ENCODE measurements at regions of chr6 and their contacts with region 1.

Region 1: DNA sequence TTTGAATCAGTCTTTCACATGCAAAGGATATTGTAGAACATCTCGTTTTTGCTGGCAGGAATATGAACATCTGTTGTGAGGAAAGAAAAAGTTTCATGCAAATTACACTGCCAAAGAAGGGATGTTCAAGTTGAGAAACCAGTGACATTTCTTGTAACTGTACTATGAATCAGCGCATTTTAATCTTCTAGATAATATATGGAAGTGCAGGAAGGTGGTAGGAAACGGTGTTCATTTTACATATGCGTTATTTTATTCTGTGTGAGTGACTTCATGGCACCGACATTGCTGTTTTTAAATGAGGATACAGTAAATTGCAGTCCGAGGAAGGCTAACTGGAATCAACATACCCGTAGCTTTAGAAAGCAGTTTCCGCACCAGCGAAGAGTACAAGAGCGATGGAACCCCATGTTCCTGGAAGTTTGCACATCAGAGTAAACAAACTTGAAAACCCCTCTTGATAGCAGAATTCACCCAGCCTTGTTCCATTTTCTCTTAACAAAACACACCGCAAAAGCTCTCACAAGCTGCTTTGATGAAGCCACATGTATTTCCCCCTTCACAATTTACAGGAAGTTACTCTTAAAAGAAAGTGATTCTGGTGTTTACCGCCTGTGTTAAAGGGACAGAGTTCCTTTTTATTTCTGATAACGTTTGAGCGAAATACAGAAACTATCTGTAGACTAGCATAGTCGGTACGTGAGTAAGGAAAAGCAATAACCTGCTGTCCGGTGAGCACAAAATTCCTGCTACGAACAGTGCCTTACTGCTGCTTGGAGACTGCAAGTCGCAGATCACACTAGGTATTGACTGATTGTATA is 11.5 kb downstream of the PRDM1 start:
- DNase-seq: peak in 8 of 9 donors; percentile 60 to 95 (median 90)
- ATAC-seq: peak; percentile 79
- H3K4me3 ChIP-seq: peak overlapping the region; percentile 60
- H3K4me3 Mint-ChIP-seq: peak overlapping the region; percentile 87 to 99 (median 93)
- H3K27ac ChIP-seq: peak overlapping the region; percentile 74
- H3K27ac Mint-ChIP-seq: peak overlapping the region; percentile 93 to 100 (median 97)
- H3K4me1 ChIP-seq: peaks cover 35 to 39% of the 10 kb centered on the region in 2 donors
- H3K4me1 Mint-ChIP-seq: peaks cover 33 to 96% (median 92%) of the 10 kb centered on the region in 7 donors
- H3K27me3 ChIP-seq: no peaks in the 10 kb centered on the region
- H3K27me3 Mint-ChIP-seq: no peaks in the 10 kb centered on the region

Region 2: GRCh38 chr6:105781915-105782314 is 315.7 kb before region 1 on chr6:
- CTCF ChIA-PET with region 1: no interaction called
- POLR2A ChIA-PET with region 1: no interaction called
- intact Hi-C with region 1: loop called in 1 of 2 experiments (anchors 2 kb)
- DNase-seq: peak in 7 of 9 donors; percentile 39 to 77 (median 63)
- ATAC-seq: peak; percentile 85
- H3K4me3 ChIP-seq: peak overlapping the region; percentile 10
- H3K4me3 Mint-ChIP-seq: peak overlapping the region; percentile 16 to 82 (median 71)
- H3K27ac ChIP-seq: peak overlapping the region; percentile 52
- H3K27ac Mint-ChIP-seq: peak overlapping the region; percentile 57 to 92 (median 71)
- H3K4me1 ChIP-seq: peaks cover 12 to 26% of the 10 kb centered on the region in 2 donors
- H3K4me1 Mint-ChIP-seq: peaks cover 31 to 80% (median 70%) of the 10 kb centered on the region in 7 donors
- H3K27me3 ChIP-seq: no peaks in the 10 kb centered on the region
- H3K27me3 Mint-ChIP-seq: no peaks in the 10 kb centered on the region

Region 3: DNA sequence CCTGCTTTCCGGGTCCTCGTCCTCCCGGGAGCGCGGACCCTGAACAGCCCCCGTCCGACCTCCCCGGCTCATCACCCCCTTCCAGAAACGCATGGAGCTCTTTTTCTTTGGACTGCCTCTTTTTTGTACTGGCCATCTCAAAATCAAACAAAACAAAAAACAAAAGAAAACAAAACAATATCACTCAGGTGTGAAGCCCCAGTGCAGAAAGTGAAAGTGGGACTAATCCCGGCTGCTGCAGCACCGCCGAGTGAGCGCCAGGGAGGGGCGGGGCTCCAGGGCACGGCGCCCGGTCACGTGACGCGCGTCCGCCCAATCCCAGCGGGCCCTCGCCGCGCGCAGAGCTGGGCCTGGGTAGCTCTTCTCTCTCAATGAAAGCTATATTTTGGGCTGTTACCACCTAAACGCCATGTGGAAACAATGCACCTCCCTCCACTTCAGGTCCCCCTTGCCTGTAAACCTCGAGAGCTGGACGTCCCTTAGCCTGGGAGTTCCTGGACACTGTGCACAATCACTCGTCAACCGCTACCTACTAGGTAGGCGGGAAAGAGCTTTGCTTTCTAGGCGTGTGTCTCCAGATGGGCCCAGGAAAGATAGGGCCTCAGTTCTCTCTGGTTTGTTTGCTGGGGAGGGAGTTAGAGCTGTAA is 105.2 kb before region 1 on chr6:
- CTCF ChIA-PET with region 1: interaction called, 4 read pairs
- POLR2A ChIA-PET with region 1: interaction called, 12 read pairs
- intact Hi-C with region 1: loop called (anchors 1 kb)
- DNase-seq: peak; percentile 82 to 91 (median 89)
- ATAC-seq: peak; percentile 93
- H3K4me3 ChIP-seq: peak overlapping the region; percentile 89
- H3K4me3 Mint-ChIP-seq: peak overlapping the region; percentile 88 to 98 (median 92)
- H3K27ac ChIP-seq: peak overlapping the region; percentile 79
- H3K27ac Mint-ChIP-seq: peak overlapping the region; percentile 87 to 97 (median 93)
- H3K4me1 ChIP-seq: peaks cover 14 to 23% of the 10 kb centered on the region in 2 donors
- H3K4me1 Mint-ChIP-seq: peaks cover 16 to 58% (median 29%) of the 10 kb centered on the region in 7 donors
- H3K27me3 ChIP-seq: peaks cover 0 to 32% of the 10 kb centered on the region in 2 donors
- H3K27me3 Mint-ChIP-seq: peaks cover 48 to 73% (median 62%) of the 10 kb centered on the region in 5 donors

Region 4: GRCh38 chr6:106114492-106115265 is 17.1 kb after region 1 on chr6:
- CTCF ChIA-PET with region 1: interaction called, 3 read pairs
- POLR2A ChIA-PET with region 1: interaction called, 9 read pairs
- intact Hi-C with region 1: loop called (anchors 1 kb)
- DNase-seq: peak in 1 of 9 donors; percentile 64
- ATAC-seq: no peak
- H3K4me3 ChIP-seq: peak overlapping the region; percentile 28
- H3K4me3 Mint-ChIP-seq: peak overlapping the region in 3 of 10 donors; percentile 11 to 52 (median 15)
- H3K27ac ChIP-seq: no peak overlapping the region
- H3K27ac Mint-ChIP-seq: peak overlapping the region in 2 of 9 donors; percentile 47 to 59
- H3K4me1 ChIP-seq: peaks cover 39 to 78% of the 10 kb centered on the region in 2 donors
- H3K4me1 Mint-ChIP-seq: peaks cover 39 to 84% (median 61%) of the 10 kb centered on the region in 7 donors
- H3K27me3 ChIP-seq: no peaks in the 10 kb centered on the region
- H3K27me3 Mint-ChIP-seq: peaks cover 0 to 5% (median 0%) of the 10 kb centered on the region in 5 donors

Region 5: GRCh38 chr6:106173124-106173879 is 75.7 kb after region 1 on chr6:
- CTCF ChIA-PET with region 1: no interaction called
- POLR2A ChIA-PET with region 1: no interaction called
- intact Hi-C with region 1: loop called in 1 of 2 experiments (anchors 2 kb)
- DNase-seq: peak in 5 of 9 donors; percentile 15 to 33 (median 32)
- ATAC-seq: peak; percentile 45
- H3K4me3 ChIP-seq: no peak overlapping the region
- H3K4me3 Mint-ChIP-seq: peak overlapping the region in 7 of 10 donors; percentile 30 to 76 (median 54)
- H3K27ac ChIP-seq: no peak overlapping the region
- H3K27ac Mint-ChIP-seq: peak overlapping the region; percentile 6 to 94 (median 74)
- H3K4me1 ChIP-seq: peaks cover 0 to 9% of the 10 kb centered on the region in 2 donors
- H3K4me1 Mint-ChIP-seq: peaks cover 14 to 41% (median 20%) of the 10 kb centered on the region in 7 donors
- H3K27me3 ChIP-seq: no peaks in the 10 kb centered on the region
- H3K27me3 Mint-ChIP-seq: no peaks in the 10 kb centered on the region

Region 6: DNA sequence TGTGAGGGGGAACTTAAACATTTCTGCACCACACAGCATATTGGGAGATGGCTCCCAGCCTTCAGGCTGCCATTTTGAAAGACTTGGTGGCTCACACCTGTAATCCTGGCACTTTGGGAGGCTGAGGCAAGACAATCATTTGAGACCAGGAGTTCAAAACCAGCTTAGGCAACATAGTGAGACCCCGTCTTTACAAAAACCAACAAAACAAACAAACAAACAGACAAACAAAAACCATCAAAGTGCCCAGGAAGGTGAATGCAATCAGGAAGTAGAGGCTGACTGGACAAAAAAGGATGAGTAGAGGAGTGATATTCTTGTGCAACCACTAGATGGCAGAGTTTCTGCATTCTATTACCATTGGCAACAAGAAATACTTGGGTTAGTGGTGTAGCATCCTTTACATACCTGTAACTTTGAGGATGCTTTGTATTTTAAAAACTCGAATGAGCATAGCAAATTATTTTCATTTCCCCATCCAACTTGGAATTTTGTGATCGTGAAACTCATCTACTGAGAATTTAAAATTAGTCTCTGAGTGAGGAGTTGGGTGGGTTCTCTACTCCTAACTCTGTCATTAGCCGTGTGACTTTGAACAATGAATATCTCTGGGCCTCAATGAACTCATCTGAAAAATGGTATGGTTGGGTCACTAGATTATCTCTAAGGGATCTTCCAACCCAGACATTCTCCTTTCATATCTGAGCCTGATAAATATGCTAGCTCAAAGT is 347.3 kb after region 1 on chr6:
- CTCF ChIA-PET with region 1: no interaction called
- POLR2A ChIA-PET with region 1: no interaction called
- intact Hi-C with region 1: loop called in 1 of 2 experiments (anchors 10 kb)
- DNase-seq: peak in 7 of 9 donors; percentile 55 to 81 (median 70)
- ATAC-seq: peak; percentile 81
- H3K4me3 ChIP-seq: no peak overlapping the region
- H3K4me3 Mint-ChIP-seq: no peak overlapping the region
- H3K27ac ChIP-seq: no peak overlapping the region
- H3K27ac Mint-ChIP-seq: peak overlapping the region in 1 of 9 donors; percentile 43
- H3K4me1 ChIP-seq: peaks cover 0 to 5% of the 10 kb centered on the region in 2 donors
- H3K4me1 Mint-ChIP-seq: peaks cover 5 to 16% (median 14%) of the 10 kb centered on the region in 7 donors
- H3K27me3 ChIP-seq: peaks cover 0 to 4% of the 10 kb centered on the region in 2 donors
- H3K27me3 Mint-ChIP-seq: peaks cover 19 to 36% (median 27%) of the 10 kb centered on the region in 5 donors

Measured in naive thymus-derived CD4-positive, alpha-beta T cell (primary cell).